AG04449 (cell line): ENCODE measurements at regions of chr11 and their contacts with region 1.

Region 1: DNA sequence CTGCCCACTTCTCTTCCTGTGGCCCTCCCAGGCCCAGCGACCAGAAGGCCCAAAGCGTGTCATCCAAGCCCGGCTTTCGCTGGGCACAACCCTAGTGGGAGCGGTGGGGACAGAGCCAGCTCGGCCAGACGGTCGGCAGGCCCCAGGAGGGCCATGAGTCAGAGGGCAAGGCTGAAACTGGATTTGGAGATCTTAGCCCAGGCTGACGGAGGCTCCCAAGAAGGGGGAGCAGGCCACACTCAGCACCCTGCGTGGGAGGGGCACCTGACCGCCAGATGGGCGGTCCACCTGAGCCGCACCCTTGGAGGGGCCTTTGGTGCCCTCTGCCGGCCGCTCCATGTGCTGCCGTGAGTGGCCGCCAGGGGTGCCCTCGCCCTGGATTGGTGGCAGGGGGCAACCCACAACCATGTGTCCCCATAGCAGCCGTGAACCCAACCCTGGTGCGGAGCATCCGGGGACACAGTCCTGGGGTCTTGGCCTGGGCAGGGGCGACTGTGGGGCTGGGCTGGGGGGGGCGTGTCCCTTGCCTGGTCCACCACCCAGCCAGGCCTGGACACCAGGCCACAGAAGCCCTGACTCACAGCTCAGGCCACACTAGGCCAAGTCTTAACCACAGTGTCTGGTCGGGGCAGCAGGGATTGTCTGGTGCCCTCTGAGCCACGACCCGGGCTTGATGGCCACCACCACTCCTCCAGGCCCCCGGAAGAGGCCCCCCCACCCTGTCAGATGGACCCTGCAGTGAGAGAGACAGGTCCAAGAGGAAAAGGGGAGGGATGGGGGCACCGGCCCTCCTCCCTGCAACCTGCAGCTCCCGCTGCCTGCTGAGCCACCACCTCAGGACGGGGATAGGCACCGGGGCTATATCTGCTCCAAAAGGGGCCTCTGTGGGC is 19.2 kb upstream of the TALDO1 start:
- DNase-seq: no peak
- H3K4me3 ChIP-seq: no peak overlapping the region
- CTCF ChIP-seq: peak; percentile 99

Region 2: DNA sequence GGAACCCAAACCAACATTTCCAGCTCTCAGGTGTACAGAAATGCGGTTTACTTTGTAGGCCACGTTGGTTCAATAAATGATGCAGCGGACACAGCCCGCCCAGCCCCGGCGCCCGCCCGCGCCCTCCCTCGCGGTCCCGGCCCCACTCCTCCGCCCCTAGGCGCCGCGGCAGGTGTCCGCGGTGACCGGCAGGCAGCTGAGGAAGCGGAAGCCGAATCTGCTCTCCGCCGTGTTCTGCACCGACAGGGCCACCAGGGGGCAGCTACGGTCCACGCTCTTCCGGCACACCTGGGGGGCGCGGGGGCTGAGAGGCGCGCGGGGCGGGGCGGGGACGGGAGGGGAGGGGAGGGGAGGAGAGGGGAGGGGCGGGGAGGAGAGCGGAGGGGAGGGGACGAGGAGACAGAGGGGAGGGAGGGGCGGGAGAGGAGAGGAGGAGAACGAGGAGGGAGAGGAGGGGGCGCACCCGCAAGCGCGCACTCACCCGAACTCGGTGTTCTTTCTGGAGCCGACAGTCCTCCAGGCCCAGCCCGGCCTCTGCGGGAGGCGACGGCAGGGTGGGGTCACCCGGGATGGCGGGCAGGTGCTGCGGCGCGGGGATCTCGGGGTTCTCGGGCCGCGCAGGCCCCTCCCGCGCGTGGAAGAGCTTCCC is 173.2 kb before region 1 on chr11:
- CTCF ChIA-PET with region 1: interaction called, 15 read pairs
- POLR2A ChIA-PET with region 1: no interaction called
- DNase-seq: no peak
- H3K4me3 ChIP-seq: no peak overlapping the region
- CTCF ChIP-seq: peak; percentile 81

Region 3: DNA sequence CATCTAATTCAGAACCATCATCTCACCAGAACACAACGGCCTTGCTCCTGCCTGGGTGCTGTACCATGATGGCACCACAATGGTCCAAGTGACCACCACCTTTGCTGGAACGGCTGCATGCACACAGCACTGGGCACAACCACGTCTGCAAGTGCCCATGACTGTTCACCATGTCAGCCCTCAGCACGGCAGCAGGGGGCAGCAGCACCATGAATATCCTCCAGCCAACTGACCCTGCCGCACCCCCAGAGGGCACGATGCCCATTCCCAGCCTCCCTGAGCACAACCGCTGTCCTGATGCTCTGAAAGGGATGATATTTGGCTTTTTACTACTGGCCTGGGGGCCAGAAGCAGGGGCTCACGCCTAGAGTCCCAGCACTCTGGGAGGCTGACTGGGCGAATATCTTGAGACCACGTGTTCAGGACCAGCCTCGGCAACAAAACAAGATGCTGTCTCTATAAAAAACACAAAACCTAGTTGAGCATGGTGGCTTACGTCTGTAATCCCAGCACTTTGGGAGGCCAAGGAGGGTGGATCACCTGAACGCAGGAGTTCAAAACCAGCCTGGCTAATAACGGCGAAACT is 65.3 kb before region 1 on chr11:
- CTCF ChIA-PET with region 1: interaction called, 22 read pairs
- POLR2A ChIA-PET with region 1: no interaction called
- DNase-seq: no peak
- H3K4me3 ChIP-seq: no peak overlapping the region
- CTCF ChIP-seq: peak; percentile 86

Region 4: DNA sequence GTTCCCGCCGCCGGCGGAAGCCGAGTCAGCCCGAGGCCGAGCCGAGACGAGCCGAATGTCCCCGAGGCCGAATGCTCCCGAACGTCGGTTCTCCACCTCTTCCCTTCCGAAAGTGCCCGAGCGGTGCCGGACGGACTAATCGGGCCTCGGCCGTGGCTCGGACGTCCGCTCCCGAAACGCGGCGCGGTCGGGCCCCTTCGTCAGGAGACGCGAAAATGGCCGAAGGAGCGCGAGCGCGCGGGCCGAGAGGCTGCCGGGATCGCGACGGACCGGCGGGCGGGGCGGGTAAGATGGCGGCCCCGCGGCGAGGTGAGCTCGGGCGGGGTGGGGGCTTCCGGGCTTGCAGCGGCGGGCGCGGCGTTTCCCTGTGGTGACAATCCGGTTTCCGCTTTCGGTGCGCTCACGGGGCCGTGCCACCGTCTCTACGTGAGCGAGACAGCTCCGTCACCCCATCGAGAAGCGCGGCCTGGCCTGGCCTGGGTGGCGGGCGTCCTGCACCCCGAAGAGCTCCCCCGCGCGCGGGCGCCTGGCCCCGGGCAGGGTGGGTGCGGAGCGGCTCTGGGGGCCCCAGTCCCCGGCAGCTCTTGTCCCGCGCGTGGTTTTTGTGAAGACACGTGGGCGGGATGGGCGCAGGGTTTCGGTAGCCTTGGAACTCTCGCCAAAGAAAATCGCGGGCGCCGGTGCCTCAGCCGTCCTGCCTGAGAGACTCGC is 32.4 kb before region 1 on chr11 and contains the start of gene TMEM80:
- CTCF ChIA-PET with region 1: interaction called, 198 read pairs
- POLR2A ChIA-PET with region 1: interaction called, 4 read pairs
- DNase-seq: peak; percentile 66
- H3K4me3 ChIP-seq: peak within 1 kb of the TSS; percentile 85
- CTCF ChIP-seq: no peak

Region 5: GRCh38 chr11:706957-707816 is 20.9 kb before region 1 on chr11:
- CTCF ChIA-PET with region 1: interaction called, 198 read pairs
- POLR2A ChIA-PET with region 1: interaction called, 7 read pairs
- DNase-seq: no peak
- H3K4me3 ChIP-seq: peak overlapping the region; percentile 61
- CTCF ChIP-seq: peak; percentile 19

Region 6: DNA sequence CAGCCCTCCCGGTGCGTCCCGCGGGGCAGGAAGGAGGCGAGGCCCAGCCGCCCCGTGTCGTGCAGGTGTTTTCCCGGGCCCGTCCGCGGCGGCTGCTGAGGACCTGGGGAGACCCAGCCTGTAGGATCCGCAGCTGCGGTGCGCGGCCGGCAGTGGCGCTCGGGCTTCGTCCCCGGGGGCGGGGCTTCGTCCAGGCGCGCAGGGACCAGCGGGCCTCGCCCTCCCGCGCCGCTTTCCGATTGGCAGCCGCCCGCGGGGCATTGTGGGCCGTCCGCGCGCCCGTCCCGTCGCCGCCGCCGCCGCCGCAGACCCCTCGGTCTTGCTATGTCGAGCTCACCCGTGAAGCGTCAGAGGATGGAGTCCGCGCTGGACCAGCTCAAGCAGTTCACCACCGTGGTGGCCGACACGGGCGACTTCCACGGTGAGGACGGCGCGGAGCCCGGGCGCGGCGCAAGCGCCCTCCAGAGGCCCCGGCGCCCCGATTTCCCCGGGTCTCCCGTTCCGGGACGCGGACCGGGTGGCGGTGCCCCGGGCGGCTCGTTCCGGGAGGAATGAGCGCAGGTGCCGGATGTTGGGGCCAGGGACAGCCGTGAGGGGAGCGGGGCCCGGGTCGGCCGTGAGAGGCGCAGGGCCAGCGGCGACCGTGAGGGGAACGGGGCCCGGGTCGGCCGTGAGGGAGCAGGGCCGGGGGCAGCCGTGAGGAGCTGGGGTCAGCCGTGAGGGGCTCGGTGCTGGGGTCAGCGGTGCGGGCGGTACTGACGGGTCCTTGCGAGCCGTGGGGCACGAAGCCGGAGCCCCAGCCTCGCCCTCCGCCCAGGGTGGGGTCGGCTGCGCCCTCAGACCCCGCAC is 19.3 kb after region 1 on chr11 and contains the start of gene TALDO1:
- CTCF ChIA-PET with region 1: interaction called, 32 read pairs
- POLR2A ChIA-PET with region 1: interaction called, 3 read pairs
- DNase-seq: no peak
- H3K4me3 ChIP-seq: peak within 1 kb of the TSS; percentile 78
- CTCF ChIP-seq: peak; percentile 34